ENCODE measurements at regions of chr3 and their contacts with region 1.

Region 1: DNA sequence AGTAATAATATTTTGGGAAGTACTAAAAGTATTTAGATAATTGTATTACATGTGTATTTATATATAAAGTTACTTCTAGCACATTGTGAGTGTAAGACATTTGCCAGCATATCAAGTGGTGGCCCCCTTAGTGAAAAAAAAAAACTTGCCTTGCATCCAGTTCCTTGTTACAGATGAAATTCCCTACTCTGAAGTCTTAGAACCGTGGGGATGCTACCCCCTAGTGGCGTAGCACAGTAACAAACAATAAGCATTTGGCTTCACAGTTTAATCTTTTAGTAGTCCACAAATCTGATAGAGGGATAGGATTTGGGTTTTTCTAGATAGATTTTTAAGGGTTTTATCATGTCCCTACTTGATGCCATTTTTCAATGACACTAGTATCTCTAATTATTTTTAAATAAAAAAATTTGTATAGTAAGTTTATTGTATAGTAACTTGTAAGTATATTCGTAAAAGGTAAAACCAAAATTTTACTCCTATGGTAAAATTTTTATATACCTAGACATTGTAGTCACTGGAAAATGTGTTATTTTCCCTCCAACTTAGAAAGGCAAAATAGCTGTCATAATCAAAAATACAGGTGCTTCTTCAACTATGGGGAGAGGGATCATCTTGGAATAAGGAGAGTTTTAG is 14.3 kb downstream of the SMC4 start:
- DNase-seq: peak; percentile 49 to 76 (median 62)
- H3K4me3 ChIP-seq: no peak overlapping the region
- H3K4me3 Mint-ChIP-seq: no peak overlapping the region
- H3K27ac ChIP-seq: no peak overlapping the region
- H3K27ac Mint-ChIP-seq: no peak overlapping the region
- H3K4me1 ChIP-seq: no peaks in the 10 kb centered on the region
- H3K4me1 Mint-ChIP-seq: peaks cover 10 to 47% (median 22%) of the 10 kb centered on the region in 3 donors
- H3K27me3 ChIP-seq: no peaks in the 10 kb centered on the region
- H3K27me3 Mint-ChIP-seq: no peaks in the 10 kb centered on the region

Region 2: GRCh38 chr3:159796744-159797143 is 617.0 kb before region 1 on chr3:
- CTCF ChIA-PET with region 1: no interaction called
- POLR2A ChIA-PET with region 1: no interaction called
- DNase-seq: no peak
- H3K4me3 ChIP-seq: no peak overlapping the region
- H3K4me3 Mint-ChIP-seq: no peak overlapping the region
- H3K27ac ChIP-seq: no peak overlapping the region
- H3K27ac Mint-ChIP-seq: no peak overlapping the region
- H3K4me1 ChIP-seq: no peaks in the 10 kb centered on the region
- H3K4me1 Mint-ChIP-seq: no peaks in the 10 kb centered on the region
- H3K27me3 ChIP-seq: no peaks in the 10 kb centered on the region
- H3K27me3 Mint-ChIP-seq: peaks cover 3 to 21% of the 10 kb centered on the region in 2 donors

Region 3: DNA sequence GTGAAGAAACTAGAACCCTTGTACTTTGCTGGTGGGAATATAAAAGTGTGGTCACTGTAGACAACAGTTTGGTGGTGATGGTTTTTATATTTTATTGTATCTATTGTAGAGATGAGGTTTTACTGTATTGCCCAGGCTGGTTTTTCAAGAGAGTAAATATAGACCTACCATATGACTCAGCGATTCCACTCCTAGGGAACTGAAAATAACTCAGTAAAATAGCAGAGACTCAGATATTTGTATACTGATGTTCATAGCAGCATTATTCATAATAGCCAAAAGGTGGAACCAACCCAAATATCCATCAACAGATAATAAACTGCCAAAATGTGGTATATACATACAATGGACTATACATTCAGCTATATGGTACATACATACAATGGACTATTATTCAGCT is 493.9 kb before region 1 on chr3:
- CTCF ChIA-PET with region 1: no interaction called
- POLR2A ChIA-PET with region 1: no interaction called
- DNase-seq: no peak
- H3K4me3 ChIP-seq: no peak overlapping the region
- H3K4me3 Mint-ChIP-seq: no peak overlapping the region
- H3K27ac ChIP-seq: no peak overlapping the region
- H3K27ac Mint-ChIP-seq: no peak overlapping the region
- H3K4me1 ChIP-seq: no peaks in the 10 kb centered on the region
- H3K4me1 Mint-ChIP-seq: no peaks in the 10 kb centered on the region
- H3K27me3 ChIP-seq: no peaks in the 10 kb centered on the region
- H3K27me3 Mint-ChIP-seq: peaks cover 16 to 21% of the 10 kb centered on the region in 2 donors

Region 4: GRCh38 chr3:160008979-160009378 is 404.8 kb before region 1 on chr3:
- CTCF ChIA-PET with region 1: no interaction called
- POLR2A ChIA-PET with region 1: no interaction called
- DNase-seq: no peak
- H3K4me3 ChIP-seq: no peak overlapping the region
- H3K4me3 Mint-ChIP-seq: no peak overlapping the region
- H3K27ac ChIP-seq: no peak overlapping the region
- H3K27ac Mint-ChIP-seq: no peak overlapping the region
- H3K4me1 ChIP-seq: no peaks in the 10 kb centered on the region
- H3K4me1 Mint-ChIP-seq: peaks cover 4 to 7% (median 6%) of the 10 kb centered on the region in 3 donors
- H3K27me3 ChIP-seq: no peaks in the 10 kb centered on the region
- H3K27me3 Mint-ChIP-seq: no peaks in the 10 kb centered on the region

Region 5: GRCh38 chr3:160449636-160450598 is 36.2 kb after region 1 on chr3 and contains the start of gene TRIM59:
- CTCF ChIA-PET with region 1: interaction called, 15 read pairs
- POLR2A ChIA-PET with region 1: interaction called, 4 read pairs
- DNase-seq: peak; percentile 93 to 97 (median 97)
- H3K4me3 ChIP-seq: peak within 1 kb of the TSS; percentile 89
- H3K4me3 Mint-ChIP-seq: peak within 1 kb of the TSS; percentile 95 to 100 (median 98)
- H3K27ac ChIP-seq: peak within 1 kb of the TSS; percentile 87
- H3K27ac Mint-ChIP-seq: peak within 1 kb of the TSS; percentile 86 to 99 (median 97)
- H3K4me1 ChIP-seq: peaks cover 18% of the 10 kb centered on the region
- H3K4me1 Mint-ChIP-seq: peaks cover 29 to 54% (median 52%) of the 10 kb centered on the region in 3 donors
- H3K27me3 ChIP-seq: no peaks in the 10 kb centered on the region
- H3K27me3 Mint-ChIP-seq: no peaks in the 10 kb centered on the region
- total RNA-seq, gene TRIM59: 30.7 to 31.4 TPM

Measured in CD8-positive, alpha-beta memory T cell (primary cell).